Stomach (tissue), 19 donors: ENCODE measurements at regions of chr13 and their contacts with region 1.

Region 1: GRCh38 chr13:99501184-99501847 is at the start of gene TM9SF2:
- DNase-seq: peak; percentile 98 to 99
- H3K4me3 ChIP-seq: peak within 1 kb of the TSS; percentile 69 to 93 (median 85)
- H3K27ac ChIP-seq: peak within 1 kb of the TSS; percentile 93 to 97 (median 94)
- H3K4me1 ChIP-seq: peaks cover 44 to 84% (median 63%) of the 10 kb centered on the region in 4 donors
- H3K27me3 ChIP-seq: no peaks in the 10 kb centered on the region
- CTCF ChIP-seq: peak in 1 of 7 experiments; percentile 21
- EP300 ChIP-seq: no peak
- POLR2A ChIP-seq: peak in 2 of 4 donors; percentile 22 to 36
- total RNA-seq, gene TM9SF2: 18.1 to 268 (median 31.2) TPM

Region 2: DNA sequence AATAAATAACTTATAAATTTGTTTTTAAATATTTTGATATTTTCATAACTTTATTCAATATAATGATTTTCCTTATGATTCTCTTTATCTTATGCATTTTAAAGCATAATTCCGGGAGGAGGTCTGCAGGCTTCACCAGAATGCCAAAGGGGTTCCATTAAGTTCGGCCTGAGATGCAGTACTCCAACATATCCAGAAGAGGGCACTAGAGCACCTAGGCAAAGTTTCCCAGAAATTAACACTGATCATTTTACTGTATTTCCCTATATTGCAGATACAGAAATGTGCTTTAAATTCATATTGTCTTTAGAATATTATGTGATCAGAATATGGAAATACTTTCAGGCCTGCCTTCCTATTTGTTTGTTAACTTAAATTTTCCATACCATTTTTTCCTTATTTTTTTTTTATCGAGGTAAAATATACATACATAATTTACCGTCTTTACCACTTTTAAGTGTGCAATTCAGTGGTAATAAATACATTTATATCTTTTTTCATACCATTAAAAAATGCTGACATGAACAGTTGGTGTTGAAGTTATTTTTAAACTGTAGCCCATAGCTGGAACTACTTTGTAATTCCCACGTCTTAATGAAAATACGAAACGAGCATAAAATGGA is 58.9 kb before region 1 on chr13:
- intact Hi-C with region 1: loop called (anchors 10 kb)
- DNase-seq: peak; percentile 52 to 72
- H3K4me3 ChIP-seq: no peak overlapping the region
- H3K27ac ChIP-seq: no peak overlapping the region
- H3K4me1 ChIP-seq: peaks cover 0 to under 1% (median 0%) of the 10 kb centered on the region in 4 donors
- H3K27me3 ChIP-seq: peaks cover 0 to 22% (median 0%) of the 10 kb centered on the region in 3 donors
- CTCF ChIP-seq: peak in 5 of 7 experiments; percentile 76 to 98 (median 93)
- EP300 ChIP-seq: no peak
- POLR2A ChIP-seq: no peak